Ovary (tissue), 10 donors: ENCODE measurements at regions of chr1 and their contacts with region 1.

Region 1: GRCh38 chr1:85065550-85065949 is 17.2 kb upstream of the MCOLN3 start:
- DNase-seq: no peak
- H3K4me3 ChIP-seq: no peak overlapping the region
- H3K27ac ChIP-seq: no peak overlapping the region
- H3K4me1 ChIP-seq: no peaks in the 10 kb centered on the region
- H3K27me3 ChIP-seq: no peaks in the 10 kb centered on the region
- CTCF ChIP-seq: no peak
- EP300 ChIP-seq: no peak
- POLR2A ChIP-seq: no peak

Region 2: GRCh38 chr1:84073276-84073675 is 992.3 kb before region 1 on chr1:
- intact Hi-C with region 1: loop called in 1 of 4 experiments (anchors 5 kb)
- DNase-seq: no peak
- H3K4me3 ChIP-seq: no peak overlapping the region
- H3K27ac ChIP-seq: no peak overlapping the region
- H3K4me1 ChIP-seq: no peaks in the 10 kb centered on the region
- H3K27me3 ChIP-seq: no peaks in the 10 kb centered on the region
- CTCF ChIP-seq: no peak
- EP300 ChIP-seq: no peak
- POLR2A ChIP-seq: no peak